A673 (cell line): ENCODE measurements at regions of chr5 and their contacts with region 1.

Region 1: DNA sequence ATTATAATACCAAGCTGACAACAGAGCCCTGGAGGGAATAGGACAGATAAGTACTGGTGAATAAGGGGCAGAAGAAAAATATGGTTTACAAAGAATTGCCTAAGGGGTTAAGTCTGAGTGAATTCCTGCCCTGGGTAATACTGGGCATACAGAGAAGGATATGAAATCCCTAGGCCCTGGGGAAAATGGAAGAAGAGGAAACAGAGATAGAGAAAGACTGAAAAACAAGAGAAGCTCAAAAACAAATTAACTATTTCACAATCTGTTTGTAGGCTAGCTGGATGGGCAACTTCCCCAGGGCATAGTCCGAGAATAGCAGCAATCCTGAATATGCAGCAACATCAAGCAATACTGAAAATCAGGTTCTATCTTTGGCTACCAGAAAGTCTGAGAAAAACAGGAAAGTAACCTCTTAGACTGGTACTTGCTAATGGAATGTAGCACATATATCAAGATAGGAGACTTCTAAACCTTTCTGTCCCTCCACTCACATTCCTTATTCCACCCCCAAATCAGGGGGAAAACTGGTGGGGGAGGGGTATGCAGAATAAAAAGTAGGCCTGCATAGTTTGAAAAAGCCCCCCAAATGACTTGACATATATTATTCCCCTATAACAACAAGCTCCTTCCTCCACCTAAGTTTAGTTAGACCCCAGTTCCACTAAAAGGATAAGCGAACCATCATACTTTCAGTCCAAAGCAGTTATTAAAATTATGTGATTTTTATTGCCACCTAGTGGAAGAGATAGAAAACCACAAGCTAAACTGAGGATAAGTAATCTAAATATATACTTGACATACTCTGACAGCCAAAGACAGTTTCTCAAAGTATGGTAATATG is 20.6 kb downstream of the SLC38A9 start:
- DNase-seq: peak; percentile 77
- H3K4me3 ChIP-seq: no peak overlapping the region
- H3K27ac ChIP-seq: no peak overlapping the region
- H3K4me1 ChIP-seq: no peaks in the 10 kb centered on the region
- H3K27me3 ChIP-seq: no peaks in the 10 kb centered on the region
- CTCF ChIP-seq: peak; percentile 74

Region 2: DNA sequence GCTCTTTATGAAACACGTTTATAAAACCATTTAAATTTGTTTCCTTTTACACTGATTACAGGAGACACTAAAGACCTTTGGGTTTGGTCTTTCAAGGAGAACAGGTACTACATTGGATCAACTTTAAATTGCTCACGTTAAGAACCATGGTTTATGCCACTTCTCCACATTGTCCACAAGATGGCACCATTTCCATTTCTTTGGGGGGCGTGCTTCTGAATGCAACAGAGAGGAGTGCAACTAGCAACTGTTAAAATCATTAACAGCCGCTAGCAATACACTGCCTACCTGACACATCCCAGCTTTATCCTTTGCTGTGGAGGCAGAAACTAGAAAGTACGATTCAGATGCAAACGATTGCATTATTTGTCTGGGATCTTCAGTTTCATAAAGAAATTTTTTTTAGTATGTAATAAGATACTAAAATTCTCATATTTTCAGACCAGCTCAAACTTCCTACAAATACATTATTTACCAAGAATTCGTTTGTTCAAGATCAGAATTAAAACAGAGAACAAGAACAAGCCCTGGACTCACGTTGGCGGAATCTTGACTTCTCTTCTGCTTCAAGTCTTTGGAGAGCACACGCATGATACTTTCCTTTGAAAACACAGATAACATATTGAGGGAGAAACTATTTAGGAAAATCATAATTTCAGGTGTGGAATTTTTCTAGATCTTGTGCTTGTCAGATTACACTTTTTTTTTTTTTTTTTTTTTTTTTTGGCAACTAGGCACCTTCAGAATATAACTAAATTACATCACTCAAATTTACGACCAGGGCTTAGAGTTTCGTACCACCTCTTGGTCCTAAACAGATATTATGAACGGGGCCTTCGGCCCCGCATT is 519.2 kb before region 1 on chr5:
- CTCF ChIA-PET with region 1: interaction called, 12 read pairs
- POLR2A ChIA-PET with region 1: no interaction called
- intact Hi-C with region 1: loop called (anchors 2 kb)
- DNase-seq: peak; percentile 92
- H3K4me3 ChIP-seq: peak overlapping the region; percentile 48
- H3K27ac ChIP-seq: no peak overlapping the region
- H3K4me1 ChIP-seq: peaks cover 24% of the 10 kb centered on the region
- H3K27me3 ChIP-seq: peaks cover 23% of the 10 kb centered on the region
- CTCF ChIP-seq: peak; percentile 85

Region 3: GRCh38 chr5:55226027-55226933 is 465.2 kb before region 1 on chr5:
- CTCF ChIA-PET with region 1: interaction called, 6 read pairs
- POLR2A ChIA-PET with region 1: no interaction called
- intact Hi-C with region 1: loop called (anchors 5 kb)
- DNase-seq: peak; percentile 89
- H3K4me3 ChIP-seq: peak overlapping the region; percentile 64
- H3K27ac ChIP-seq: no peak overlapping the region
- H3K4me1 ChIP-seq: peaks cover 1% of the 10 kb centered on the region
- H3K27me3 ChIP-seq: peaks cover 10% of the 10 kb centered on the region
- CTCF ChIP-seq: peak; percentile 92

Region 4: GRCh38 chr5:55324815-55325418 is 366.6 kb before region 1 on chr5:
- CTCF ChIA-PET with region 1: interaction called, 3 read pairs
- POLR2A ChIA-PET with region 1: no interaction called
- intact Hi-C with region 1: loop called (anchors 5 kb)
- DNase-seq: peak; percentile 60
- H3K4me3 ChIP-seq: no peak overlapping the region
- H3K27ac ChIP-seq: no peak overlapping the region
- H3K4me1 ChIP-seq: no peaks in the 10 kb centered on the region
- H3K27me3 ChIP-seq: no peaks in the 10 kb centered on the region
- CTCF ChIP-seq: peak; percentile 72

Region 5: DNA sequence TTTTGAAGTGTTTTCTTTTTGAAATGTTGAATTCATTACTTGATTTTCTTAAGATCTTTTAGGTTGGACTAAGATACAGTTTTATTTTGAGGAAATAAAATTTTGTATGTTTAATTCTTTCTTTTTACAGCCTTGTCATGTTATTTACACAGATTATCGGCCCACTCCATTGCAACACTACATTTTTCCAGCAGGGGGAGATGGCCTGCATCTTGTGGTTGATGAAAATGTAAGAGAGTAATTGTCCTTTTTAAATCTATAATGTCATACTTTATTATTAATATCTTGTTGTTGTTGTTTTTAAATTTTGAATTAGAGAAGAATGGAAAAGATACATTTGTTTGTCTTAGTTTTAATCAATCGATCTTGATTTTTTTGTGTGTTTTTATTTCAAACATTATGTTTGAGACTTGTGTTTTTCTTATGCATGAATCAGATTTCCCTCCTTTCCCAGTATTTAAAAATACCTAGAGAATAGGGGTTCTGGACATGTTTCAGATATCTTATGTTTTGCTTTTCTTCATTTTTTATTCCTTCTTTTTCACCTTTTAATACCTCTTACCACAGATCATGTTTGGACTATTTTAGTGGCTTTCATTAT is 347.0 kb before region 1 on chr5:
- CTCF ChIA-PET with region 1: no interaction called
- POLR2A ChIA-PET with region 1: no interaction called
- intact Hi-C with region 1: loop called (anchors 5 kb)
- DNase-seq: peak; percentile 57
- H3K4me3 ChIP-seq: no peak overlapping the region
- H3K27ac ChIP-seq: no peak overlapping the region
- H3K4me1 ChIP-seq: peaks cover 5% of the 10 kb centered on the region
- H3K27me3 ChIP-seq: no peaks in the 10 kb centered on the region
- CTCF ChIP-seq: peak; percentile 88

Region 6: DNA sequence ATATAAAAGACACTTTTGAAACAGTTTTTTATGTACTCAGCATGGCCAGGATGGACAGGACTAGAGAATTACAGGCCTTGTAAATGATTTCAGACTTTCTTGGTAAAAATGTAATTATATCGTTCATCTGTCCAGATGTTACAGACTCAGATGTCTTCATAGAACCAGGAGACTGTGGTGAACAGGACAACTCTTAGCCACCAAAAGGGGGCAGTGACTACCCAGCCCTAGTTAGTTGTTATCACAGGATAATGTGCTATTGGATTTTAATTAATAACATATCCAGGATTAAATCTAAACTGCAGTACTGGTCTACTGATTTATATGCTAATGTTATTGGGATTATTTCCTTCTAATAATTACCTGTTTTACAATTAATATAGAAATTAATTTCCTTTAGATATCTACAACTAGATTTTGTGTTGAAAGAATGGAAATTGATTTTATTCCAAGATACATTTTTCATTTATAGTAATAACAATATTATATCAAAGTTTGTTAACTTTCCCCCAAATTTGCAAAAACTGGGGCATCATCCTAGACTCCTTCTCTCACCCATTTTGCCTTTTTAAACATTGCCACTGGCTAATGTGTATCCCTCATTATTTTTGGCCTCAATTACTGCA is 284.3 kb before region 1 on chr5:
- CTCF ChIA-PET with region 1: interaction called, 6 read pairs
- POLR2A ChIA-PET with region 1: no interaction called
- intact Hi-C with region 1: loop called (anchors 2 kb)
- DNase-seq: peak; percentile 40
- H3K4me3 ChIP-seq: no peak overlapping the region
- H3K27ac ChIP-seq: no peak overlapping the region
- H3K4me1 ChIP-seq: no peaks in the 10 kb centered on the region
- H3K27me3 ChIP-seq: no peaks in the 10 kb centered on the region
- CTCF ChIP-seq: peak; percentile 72

Region 7: GRCh38 chr5:55885359-55885758 is 193.9 kb after region 1 on chr5:
- CTCF ChIA-PET with region 1: no interaction called
- POLR2A ChIA-PET with region 1: no interaction called
- intact Hi-C with region 1: no loop called
- DNase-seq: no peak
- H3K4me3 ChIP-seq: no peak overlapping the region
- H3K27ac ChIP-seq: no peak overlapping the region
- H3K4me1 ChIP-seq: no peaks in the 10 kb centered on the region
- H3K27me3 ChIP-seq: no peaks in the 10 kb centered on the region
- CTCF ChIP-seq: no peak

Region 8: GRCh38 chr5:56501781-56502557 is 810.5 kb after region 1 on chr5:
- CTCF ChIA-PET with region 1: interaction called, 12 read pairs
- POLR2A ChIA-PET with region 1: no interaction called
- intact Hi-C with region 1: no loop called
- DNase-seq: no peak
- H3K4me3 ChIP-seq: no peak overlapping the region
- H3K27ac ChIP-seq: no peak overlapping the region
- H3K4me1 ChIP-seq: no peaks in the 10 kb centered on the region
- H3K27me3 ChIP-seq: no peaks in the 10 kb centered on the region
- CTCF ChIP-seq: no peak